A673 (cell line): ENCODE measurements at regions of chr7 and their contacts with region 1.

Region 1: DNA sequence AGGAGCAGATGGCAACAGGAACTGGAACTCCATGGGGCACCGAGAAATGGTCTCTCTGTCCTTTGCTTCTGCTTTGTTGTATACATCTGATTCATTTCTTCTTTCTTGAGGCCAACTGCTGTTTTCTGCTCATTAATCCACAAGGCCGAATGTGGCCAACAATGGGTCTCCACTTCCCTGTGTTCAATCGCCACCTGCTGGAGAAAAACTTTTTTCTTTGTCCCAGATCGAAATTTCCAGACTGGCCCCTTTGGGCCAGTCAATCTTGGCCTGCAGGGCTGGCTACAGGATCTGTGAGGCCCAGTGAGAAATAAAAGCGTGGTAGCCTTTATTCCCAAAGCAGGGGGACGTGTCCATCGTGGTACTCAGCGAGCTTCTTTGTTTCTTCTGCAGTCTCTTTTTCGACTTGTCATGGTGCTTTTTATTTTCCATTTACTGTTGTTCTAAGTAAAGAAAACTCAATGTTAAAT is 58.8 kb downstream of the PARP12 start:
- DNase-seq: peak; percentile 65
- H3K4me3 ChIP-seq: no peak overlapping the region
- H3K27ac ChIP-seq: no peak overlapping the region
- H3K4me1 ChIP-seq: no peaks in the 10 kb centered on the region
- H3K27me3 ChIP-seq: no peaks in the 10 kb centered on the region
- CTCF ChIP-seq: peak; percentile 64

Region 2: DNA sequence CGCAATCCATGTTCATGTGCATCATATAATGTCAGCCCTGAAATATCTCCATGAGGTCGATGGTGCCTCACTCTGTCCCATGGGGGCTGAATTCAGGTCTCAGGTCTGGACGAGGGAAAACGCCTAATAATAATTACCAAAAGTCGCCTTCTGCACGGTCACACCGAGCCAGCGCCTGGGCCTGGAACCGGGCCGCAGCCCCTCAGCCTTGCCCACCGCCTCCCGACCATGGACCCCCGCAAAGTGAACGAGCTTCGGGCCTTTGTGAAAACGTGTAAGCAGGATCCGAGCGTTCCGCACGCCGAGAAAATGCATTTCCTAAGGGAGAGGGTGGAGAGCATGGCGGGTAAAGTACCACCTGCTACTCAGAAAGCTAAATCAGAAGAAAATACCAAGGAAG is 501.7 kb before region 1 on chr7:
- CTCF ChIA-PET with region 1: interaction called, 6 read pairs
- POLR2A ChIA-PET with region 1: no interaction called
- intact Hi-C with region 1: loop called (anchors 1 kb)
- DNase-seq: no peak
- H3K4me3 ChIP-seq: no peak overlapping the region
- H3K27ac ChIP-seq: no peak overlapping the region
- H3K4me1 ChIP-seq: no peaks in the 10 kb centered on the region
- H3K27me3 ChIP-seq: no peaks in the 10 kb centered on the region
- CTCF ChIP-seq: no peak

Region 3: DNA sequence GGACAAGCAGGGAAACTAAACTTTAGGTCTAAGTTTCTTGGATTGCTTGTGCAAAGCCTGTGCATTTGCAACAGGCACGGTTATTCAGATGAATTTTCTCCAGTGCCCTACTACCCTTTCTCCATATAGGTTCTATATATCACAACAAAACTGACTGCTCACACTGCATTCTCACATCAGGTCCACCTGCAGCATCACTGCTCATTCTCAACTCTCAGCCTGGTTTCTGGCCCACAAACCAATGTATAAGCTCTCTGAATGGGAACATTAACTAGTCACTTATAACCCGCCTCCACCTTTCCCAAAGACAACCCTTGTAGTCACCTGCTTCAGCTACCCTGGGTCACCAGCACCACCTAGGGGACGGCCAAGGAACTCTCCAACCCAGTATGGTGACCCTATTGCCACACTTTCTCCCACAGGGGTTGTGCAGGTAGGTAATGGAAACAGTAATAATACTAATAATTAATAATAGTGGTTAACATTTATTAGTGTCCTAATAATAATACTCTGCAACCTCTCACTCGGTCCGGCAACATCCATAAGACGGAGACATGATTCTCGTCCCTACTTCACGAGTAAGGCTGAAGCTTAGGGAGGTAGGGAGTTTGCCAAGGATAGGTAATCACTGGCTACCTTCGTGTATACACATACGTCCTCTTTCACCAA is 383.1 kb before region 1 on chr7:
- CTCF ChIA-PET with region 1: interaction called, 12 read pairs
- POLR2A ChIA-PET with region 1: no interaction called
- intact Hi-C with region 1: loop called (anchors 1 kb)
- DNase-seq: peak; percentile 38
- H3K4me3 ChIP-seq: no peak overlapping the region
- H3K27ac ChIP-seq: no peak overlapping the region
- H3K4me1 ChIP-seq: peaks cover 7% of the 10 kb centered on the region
- H3K27me3 ChIP-seq: no peaks in the 10 kb centered on the region
- CTCF ChIP-seq: peak; percentile 78

Region 4: GRCh38 chr7:139777948-139778841 is 225.8 kb before region 1 on chr7 and contains the start of gene HIPK2:
- CTCF ChIA-PET with region 1: no interaction called
- POLR2A ChIA-PET with region 1: no interaction called
- intact Hi-C with region 1: loop called (anchors 5 kb)
- DNase-seq: peak; percentile 85
- H3K4me3 ChIP-seq: peak within 1 kb of the TSS; percentile 92
- H3K27ac ChIP-seq: peak within 1 kb of the TSS; percentile 65
- H3K4me1 ChIP-seq: peaks cover 16% of the 10 kb centered on the region
- H3K27me3 ChIP-seq: peaks cover 17% of the 10 kb centered on the region
- CTCF ChIP-seq: no peak
- total RNA-seq, gene HIPK2: 30.7 and 32.4 TPM in 2 replicates

Region 5: GRCh38 chr7:140358412-140359051 is 354.6 kb after region 1 on chr7:
- CTCF ChIA-PET with region 1: no interaction called
- POLR2A ChIA-PET with region 1: no interaction called
- intact Hi-C with region 1: no loop called
- DNase-seq: no peak
- H3K4me3 ChIP-seq: no peak overlapping the region
- H3K27ac ChIP-seq: no peak overlapping the region
- H3K4me1 ChIP-seq: no peaks in the 10 kb centered on the region
- H3K27me3 ChIP-seq: no peaks in the 10 kb centered on the region
- CTCF ChIP-seq: no peak